Activated CD8-positive, alpha-beta T cell treated with anti-CD3 and anti-CD28 coated beads for 36 hours (primary cell): ENCODE measurements at regions of chr9 and their contacts with region 1.

Region 1: DNA sequence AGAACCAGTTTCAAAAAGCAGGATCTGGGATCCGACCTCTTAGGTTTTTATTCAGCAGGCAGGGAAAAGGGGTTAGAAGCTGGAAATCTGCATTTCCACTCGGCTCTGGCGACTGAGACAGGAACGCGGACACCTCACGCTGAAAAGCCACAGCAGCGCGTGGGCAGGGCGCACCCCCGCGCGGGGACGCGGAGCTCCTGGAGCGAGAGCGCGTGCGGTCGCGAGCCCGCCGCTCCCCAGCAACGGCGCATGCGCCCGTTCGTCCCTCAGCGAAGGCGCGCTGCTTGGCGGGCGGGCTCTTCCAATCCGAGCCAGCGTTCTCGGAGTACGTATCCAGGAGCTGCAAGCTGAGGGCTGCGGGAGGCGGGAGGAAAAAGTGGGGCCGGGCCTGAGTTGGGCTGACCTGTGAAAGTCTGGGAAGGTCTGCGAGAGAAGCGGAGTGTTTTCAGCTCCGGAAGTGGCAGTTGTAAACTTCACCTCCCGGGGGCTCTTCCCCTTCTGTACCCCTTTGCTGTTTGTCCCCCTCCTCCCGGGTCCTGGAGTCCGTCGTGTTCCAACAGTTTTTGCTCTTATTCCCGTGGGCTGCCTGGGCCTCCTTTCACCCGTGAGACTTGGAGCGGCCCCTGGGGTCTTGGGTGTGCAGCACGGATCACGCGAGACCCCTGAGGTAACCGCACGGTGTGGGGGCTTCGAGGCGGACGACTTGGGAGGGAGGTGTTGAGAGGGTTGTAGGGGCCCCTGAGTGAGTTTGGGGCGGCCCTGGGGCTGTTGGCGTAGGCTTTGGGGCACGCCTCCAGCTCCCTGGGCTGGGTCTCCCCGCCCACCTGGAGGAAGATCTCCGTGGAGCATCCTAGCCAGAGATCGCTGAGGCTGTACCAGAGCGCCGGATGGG is at the start of gene CCDC171:
- DNase-seq: peak; percentile 87
- ATAC-seq: peak; percentile 89
- H3K4me3 Mint-ChIP-seq: peak within 1 kb of the TSS; percentile 88
- H3K27ac Mint-ChIP-seq: peak within 1 kb of the TSS; percentile 90
- H3K4me1 Mint-ChIP-seq: peaks cover 7% of the 10 kb centered on the region
- H3K27me3 Mint-ChIP-seq: no peaks in the 10 kb centered on the region
- CTCF ChIP-seq: peak; percentile 14
- total RNA-seq, gene CCDC171: 2.1 to 2.3 TPM

Region 2: GRCh38 chr9:15606643-15607472 is 54.0 kb after region 1 on chr9:
- CTCF ChIA-PET with region 1: interaction called, 42 read pairs
- POLR2A ChIA-PET with region 1: no interaction called
- intact Hi-C with region 1: loop called (anchors 5 kb)
- DNase-seq: peak; percentile 2
- ATAC-seq: peak; percentile 70
- H3K4me3 Mint-ChIP-seq: no peak overlapping the region
- H3K27ac Mint-ChIP-seq: no peak overlapping the region
- H3K4me1 Mint-ChIP-seq: peaks cover 4% of the 10 kb centered on the region
- H3K27me3 Mint-ChIP-seq: no peaks in the 10 kb centered on the region
- CTCF ChIP-seq: peak; percentile 78

Region 3: DNA sequence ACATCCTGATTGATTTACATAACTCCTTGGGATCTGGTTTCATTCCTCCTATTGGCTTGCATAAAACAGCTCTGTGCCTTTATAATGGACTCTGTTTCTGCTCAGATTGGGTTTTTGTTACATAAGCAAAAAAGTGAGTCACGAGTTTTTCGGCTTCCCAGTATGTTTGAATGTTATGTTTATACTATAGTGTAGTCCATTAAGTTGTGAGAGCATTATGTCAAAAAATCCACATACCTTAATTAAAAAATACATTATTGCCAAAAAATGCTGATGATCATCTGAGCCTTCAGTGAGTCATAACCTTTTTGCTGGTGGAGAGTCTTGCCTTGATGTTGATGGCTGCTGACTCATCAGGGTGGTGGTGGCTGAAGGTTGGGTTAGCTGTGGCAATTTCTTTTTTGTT is 144.6 kb after region 1 on chr9:
- CTCF ChIA-PET with region 1: no interaction called
- POLR2A ChIA-PET with region 1: no interaction called
- intact Hi-C with region 1: no loop called
- DNase-seq: peak; percentile 21
- ATAC-seq: no peak
- H3K4me3 Mint-ChIP-seq: no peak overlapping the region
- H3K27ac Mint-ChIP-seq: no peak overlapping the region
- H3K4me1 Mint-ChIP-seq: no peaks in the 10 kb centered on the region
- H3K27me3 Mint-ChIP-seq: no peaks in the 10 kb centered on the region
- CTCF ChIP-seq: no peak